AG04450 (cell line): ENCODE measurements at regions of chr4 and their contacts with region 1.

Region 1: DNA sequence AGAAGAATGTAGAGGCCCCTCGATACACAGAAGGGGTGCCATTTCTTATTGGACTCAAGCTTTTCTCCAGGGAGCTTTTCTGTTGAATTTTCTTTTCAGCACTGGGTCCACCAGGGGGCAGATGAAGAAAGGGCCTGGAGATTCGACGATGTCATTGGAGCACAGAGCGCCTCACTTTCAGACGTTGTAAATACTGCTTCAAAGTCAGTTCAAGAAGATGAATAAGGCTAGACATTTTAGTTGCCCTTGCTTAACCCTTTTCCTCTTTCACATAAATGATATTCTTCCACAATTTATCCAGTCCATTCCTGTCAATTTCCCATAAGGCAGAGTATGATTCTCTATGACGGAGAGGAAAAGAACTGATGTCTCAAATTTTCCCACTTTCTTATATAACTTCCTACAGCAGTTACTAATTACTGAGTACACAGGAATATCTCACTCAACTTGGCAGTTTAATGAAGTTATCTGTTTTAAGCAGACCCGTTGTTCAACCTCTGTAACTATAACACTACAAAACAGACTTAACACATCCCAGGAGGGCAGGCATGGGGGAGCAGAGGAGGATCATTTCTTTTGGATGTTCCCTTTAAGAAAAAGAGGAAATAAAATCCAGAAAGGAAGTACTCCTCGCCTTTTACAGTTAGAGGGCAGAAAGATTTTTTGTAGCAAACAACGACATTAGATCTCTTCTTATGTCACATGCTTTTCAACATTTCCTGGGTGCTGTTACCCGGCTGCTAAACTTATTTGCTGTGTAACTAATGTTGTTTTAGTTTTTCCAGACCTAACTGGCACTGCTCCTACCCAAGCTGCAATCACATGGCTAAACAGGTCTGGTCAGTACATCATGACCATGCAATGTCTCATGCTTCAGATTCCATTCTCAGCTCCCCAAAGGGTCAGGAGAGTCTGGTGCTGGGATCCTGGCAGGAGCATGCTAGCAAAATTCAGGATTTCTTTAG is 12.2 kb upstream of the CENPU start:
- DNase-seq: peak; percentile 58
- H3K4me3 ChIP-seq: no peak overlapping the region
- H3K27ac ChIP-seq: no peak overlapping the region
- H3K27me3 ChIP-seq: no peaks in the 10 kb centered on the region
- CTCF ChIP-seq: peak; percentile 90

Region 2: GRCh38 chr4:184713887-184714286 is 32.2 kb before region 1 on chr4:
- CTCF ChIA-PET with region 1: no interaction called
- POLR2A ChIA-PET with region 1: no interaction called
- DNase-seq: no peak
- H3K4me3 ChIP-seq: no peak overlapping the region
- H3K27ac ChIP-seq: no peak overlapping the region
- H3K27me3 ChIP-seq: no peaks in the 10 kb centered on the region
- CTCF ChIP-seq: no peak

Region 3: DNA sequence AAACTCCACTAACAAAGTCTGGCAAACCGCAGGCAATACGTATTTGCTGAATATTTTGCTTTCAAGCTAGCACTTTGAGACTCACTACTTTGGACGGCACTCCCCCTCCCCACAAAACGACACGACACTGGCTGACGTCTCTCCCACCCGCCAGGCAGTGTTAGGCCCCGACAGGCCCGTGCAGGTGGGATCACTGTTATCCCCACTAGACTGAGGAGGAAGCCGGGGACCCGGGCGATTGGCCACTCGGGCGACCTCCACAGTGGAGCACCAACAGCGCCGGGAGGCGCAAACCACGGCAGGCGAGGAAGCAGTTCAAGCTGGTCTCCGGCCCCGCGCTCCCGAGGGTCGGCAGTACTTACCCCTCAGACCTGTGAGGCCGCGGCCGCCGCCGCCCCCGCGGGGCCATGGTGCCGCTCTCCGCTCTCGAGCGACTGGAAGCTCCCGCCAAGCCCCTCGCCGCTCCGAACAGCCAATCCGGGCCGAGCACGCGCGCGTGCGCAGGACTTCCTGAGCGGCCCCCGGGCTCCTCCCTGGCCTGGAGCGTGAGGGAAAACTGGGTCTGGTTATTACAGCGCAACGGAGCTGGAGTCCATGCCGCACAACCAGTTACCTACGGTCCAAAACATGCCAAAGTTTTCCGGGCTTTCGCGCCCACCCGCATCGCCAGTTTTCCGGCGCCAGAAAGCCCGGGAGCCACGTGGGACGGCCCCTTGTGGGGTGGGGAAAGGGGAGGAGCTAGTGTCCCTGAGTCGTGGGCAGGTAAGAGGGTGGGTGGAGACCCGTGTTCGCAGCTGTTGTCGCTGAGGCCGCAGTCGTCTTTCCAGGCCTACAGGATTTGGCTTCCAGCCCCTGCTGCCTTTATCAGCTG is 12.2 kb before region 1 on chr4 and contains the start of gene CENPU:
- CTCF ChIA-PET with region 1: interaction called, 32 read pairs
- POLR2A ChIA-PET with region 1: interaction called, 10 read pairs
- DNase-seq: peak; percentile 96
- H3K4me3 ChIP-seq: peak within 1 kb of the TSS; percentile 89
- H3K27ac ChIP-seq: peak within 1 kb of the TSS; percentile 52
- H3K27me3 ChIP-seq: no peaks in the 10 kb centered on the region
- CTCF ChIP-seq: no peak
- polyA plus RNA-seq, gene CENPU: 6.3 and 8.0 TPM in 2 replicates

Region 4: DNA sequence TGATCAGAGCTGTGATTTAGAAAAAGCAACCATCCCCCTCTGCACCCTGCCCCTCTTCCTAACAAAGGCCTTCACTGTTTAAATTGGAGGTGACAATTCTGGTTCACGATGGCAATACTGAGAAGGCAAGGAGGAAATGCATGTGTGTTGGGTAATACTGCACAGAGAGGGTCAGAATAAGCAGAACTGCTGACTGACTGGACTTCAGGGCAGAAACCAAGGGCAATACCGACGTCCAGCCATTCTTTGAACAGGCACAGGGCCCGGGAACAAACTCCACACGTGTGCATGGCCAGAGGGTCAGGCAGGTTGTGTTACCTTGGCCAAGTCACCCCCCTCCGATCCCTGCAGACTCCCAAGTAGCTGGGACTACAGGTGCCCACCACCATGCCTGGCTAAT is 73.7 kb after region 1 on chr4:
- CTCF ChIA-PET with region 1: interaction called, 10 read pairs
- POLR2A ChIA-PET with region 1: interaction called, 3 read pairs
- DNase-seq: no peak
- H3K4me3 ChIP-seq: no peak overlapping the region
- H3K27ac ChIP-seq: no peak overlapping the region
- H3K27me3 ChIP-seq: no peaks in the 10 kb centered on the region
- CTCF ChIP-seq: no peak

Region 5: GRCh38 chr4:184983672-184984356 is 237.7 kb after region 1 on chr4:
- CTCF ChIA-PET with region 1: interaction called, 19 read pairs
- POLR2A ChIA-PET with region 1: no interaction called
- DNase-seq: no peak
- H3K4me3 ChIP-seq: no peak overlapping the region
- H3K27ac ChIP-seq: no peak overlapping the region
- H3K27me3 ChIP-seq: peaks cover 18% of the 10 kb centered on the region
- CTCF ChIP-seq: peak; percentile 47